Activated B cell treated with CpG ODN at 0.5 μM for 24 hours (primary cell): ENCODE measurements at regions of chr11 and their contacts with region 1.

Region 1: DNA sequence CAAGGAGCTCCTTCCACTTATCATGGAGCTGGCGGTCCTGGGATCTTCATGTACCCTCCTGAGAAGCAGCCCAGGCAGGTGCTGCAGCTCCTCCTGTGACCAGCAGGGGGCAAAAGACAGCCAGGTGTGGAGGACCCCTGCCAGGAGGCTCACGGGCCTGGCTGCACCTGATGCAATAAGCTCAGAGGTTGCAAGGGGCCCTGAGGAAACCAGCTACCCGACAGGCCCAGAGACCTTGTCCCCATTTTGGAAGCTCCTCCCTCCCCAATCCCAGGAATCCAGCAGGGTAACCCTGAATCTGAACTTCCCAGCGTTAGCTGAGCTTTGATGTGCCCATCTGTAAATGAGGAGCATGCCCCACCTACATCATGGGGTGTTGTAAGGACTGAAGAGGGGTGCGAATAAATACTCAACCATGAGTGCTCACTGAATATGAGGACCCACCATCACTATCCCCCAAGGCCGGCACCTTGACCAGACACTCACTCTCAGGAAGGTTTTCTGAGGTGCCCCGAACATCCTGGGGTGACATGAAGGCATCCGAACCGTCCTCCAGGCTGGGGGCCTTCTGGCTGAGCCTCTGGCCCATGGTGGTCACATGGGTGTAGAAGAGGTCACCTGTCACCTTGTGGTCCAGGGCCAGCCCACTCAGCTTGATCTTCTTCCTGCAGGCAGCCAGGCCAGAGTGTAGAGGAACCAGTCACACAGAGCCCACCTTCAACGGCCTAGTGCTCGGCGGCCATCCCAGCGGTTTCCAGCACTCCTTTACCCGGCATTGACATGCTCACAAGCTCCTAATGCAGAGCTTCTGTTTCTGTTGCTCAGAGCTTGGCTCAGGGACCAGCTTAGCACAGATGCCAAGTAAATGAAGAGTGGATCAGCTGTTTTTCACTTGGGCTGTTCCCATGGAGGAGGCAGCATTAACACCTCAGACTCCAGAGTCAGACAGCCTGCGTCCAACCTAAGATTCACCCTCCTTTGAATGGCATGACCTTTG is 21.7 kb downstream of the SLC43A1 start:
- DNase-seq: peak; percentile 64
- ATAC-seq: peak; percentile 96
- H3K4me3 Mint-ChIP-seq: no peak overlapping the region
- H3K27ac Mint-ChIP-seq: peak overlapping the region; percentile 76
- H3K4me1 Mint-ChIP-seq: peaks cover 7% of the 10 kb centered on the region
- H3K27me3 Mint-ChIP-seq: no peaks in the 10 kb centered on the region
- CTCF ChIP-seq: peak; percentile 30

Region 2: DNA sequence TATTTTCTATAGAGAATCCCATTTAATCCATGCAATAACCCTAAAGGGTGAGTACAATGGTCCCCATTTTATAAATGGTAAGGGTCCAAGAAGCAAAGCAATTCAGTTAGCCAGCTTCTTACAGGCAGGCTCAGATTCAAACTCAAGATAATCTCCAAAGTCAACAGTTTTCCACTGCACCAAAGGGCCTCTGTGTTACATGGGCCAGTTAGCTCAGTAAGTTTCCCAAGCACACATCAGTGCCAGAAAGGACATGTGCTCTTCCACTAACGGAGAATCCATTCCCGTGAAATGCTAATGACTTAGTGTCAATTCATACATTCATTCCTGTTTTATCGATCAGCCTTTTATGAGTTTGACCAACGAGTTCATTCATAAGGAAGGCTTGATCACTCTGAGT is 10.7 kb after region 1 on chr11:
- CTCF ChIA-PET with region 1: interaction called, 22 read pairs
- POLR2A ChIA-PET with region 1: no interaction called
- intact Hi-C with region 1: no loop called
- DNase-seq: no peak
- ATAC-seq: no peak
- H3K4me3 Mint-ChIP-seq: no peak overlapping the region
- H3K27ac Mint-ChIP-seq: no peak overlapping the region
- H3K4me1 Mint-ChIP-seq: peaks cover 6% of the 10 kb centered on the region
- H3K27me3 Mint-ChIP-seq: no peaks in the 10 kb centered on the region
- CTCF ChIP-seq: no peak

Region 3: DNA sequence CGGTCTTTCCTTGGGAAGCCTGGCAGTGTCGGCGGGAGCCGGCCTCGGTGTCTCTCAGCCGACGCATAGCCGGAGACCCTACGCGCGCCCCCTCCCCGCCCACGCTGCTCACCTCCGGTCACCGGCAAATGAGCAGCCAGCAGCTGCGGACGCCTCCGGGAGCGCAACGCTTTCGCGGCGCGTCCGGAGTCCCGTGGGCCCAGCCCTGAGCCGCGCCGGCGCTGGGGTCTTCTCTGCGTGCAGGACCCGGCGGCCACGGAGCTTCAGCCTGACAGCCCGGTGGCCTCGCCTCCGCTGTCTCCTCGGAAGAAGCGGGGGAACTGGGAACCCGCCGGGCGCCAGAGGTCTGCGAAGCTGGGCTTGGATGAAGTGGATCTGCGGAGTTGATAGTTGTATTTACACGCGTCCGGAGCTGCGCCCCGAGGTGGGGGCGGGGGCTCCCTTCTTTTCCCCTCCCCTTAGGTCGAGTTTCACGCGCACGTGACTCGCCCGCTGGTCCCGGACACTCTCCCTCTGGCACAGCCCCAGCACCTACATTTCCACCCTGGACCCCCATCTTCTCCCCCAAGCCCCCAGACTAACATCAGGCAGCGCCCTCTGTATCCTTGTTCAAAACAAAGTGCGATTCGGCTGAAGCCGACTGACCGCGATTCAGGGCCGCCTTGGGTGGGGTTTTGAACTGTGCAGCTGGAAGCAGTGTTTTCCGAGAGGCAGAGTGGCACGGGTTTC is 21.7 kb after region 1 on chr11 and contains the start of gene SLC43A1:
- CTCF ChIA-PET with region 1: interaction called, 45 read pairs
- POLR2A ChIA-PET with region 1: interaction called, 18 read pairs
- intact Hi-C with region 1: loop called (anchors 2 kb)
- DNase-seq: peak; percentile 27
- ATAC-seq: peak; percentile 29
- H3K4me3 Mint-ChIP-seq: peak within 1 kb of the TSS; percentile 97
- H3K27ac Mint-ChIP-seq: peak within 1 kb of the TSS; percentile 80
- H3K4me1 Mint-ChIP-seq: peaks cover 43% of the 10 kb centered on the region
- H3K27me3 Mint-ChIP-seq: no peaks in the 10 kb centered on the region
- CTCF ChIP-seq: no peak
- total RNA-seq, gene SLC43A1: 11.1 and 12.8 TPM in 2 replicates

Region 4: DNA sequence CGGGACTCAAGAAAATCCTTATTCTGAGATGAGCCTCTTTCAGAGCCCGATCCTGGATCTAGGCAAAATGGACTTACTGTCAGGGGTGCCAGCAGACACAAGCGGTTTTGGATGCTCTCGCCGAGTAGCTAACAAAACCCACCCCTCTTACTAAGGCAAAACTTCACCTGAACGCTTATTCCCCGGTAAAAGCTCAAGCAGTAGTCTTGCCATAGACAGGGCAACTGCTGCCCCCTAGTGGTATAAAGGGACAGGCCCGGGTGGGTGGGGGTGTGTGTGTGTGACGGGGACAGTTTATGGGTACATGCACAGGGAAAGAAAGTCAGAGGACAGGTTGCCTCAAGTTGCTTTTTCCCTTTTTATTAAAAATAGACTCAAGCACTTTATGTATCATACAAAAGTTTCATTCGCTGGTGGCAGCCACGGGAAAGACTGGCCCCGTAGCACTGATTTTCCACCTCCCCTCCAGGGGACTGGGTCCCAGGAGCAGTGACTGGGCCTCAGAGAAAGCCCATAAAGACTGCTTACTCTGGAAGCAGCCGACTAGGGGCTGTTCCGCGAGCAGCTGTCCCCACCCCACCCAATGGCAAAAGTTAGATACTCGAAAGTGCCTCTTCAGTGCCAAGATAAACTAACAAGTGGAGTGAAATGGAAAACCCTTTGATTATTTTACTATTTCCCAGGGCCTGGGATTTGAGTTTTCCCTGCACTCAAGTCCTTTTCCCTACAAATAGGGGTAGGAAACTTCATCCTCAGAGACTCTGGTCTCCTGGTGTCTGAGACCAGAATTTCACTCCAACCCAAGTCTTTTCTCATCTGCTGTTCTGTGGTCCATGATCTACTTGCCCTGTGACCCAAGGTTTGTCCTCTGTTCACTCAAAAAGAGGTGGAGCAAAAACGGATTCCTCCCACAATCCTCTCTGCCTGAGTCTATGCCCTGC is 151.2 kb after region 1 on chr11:
- CTCF ChIA-PET with region 1: interaction called, 26 read pairs
- POLR2A ChIA-PET with region 1: interaction called, 6 read pairs
- intact Hi-C with region 1: loop called (anchors 1 kb)
- DNase-seq: peak; percentile 65
- ATAC-seq: peak; percentile 82
- H3K4me3 Mint-ChIP-seq: no peak overlapping the region
- H3K27ac Mint-ChIP-seq: no peak overlapping the region
- H3K4me1 Mint-ChIP-seq: peaks cover 40% of the 10 kb centered on the region
- H3K27me3 Mint-ChIP-seq: peaks cover 58% of the 10 kb centered on the region
- CTCF ChIP-seq: no peak